Activated CD4-positive, alpha-beta T cell treated with anti-CD3 and anti-CD28 coated beads, Interleukin-2, amount 10 ng/mL, durations not matched to agents 24 days and 14 days (primary cell): ENCODE measurements at regions of chr16 and their contacts with region 1.

Region 1: GRCh38 chr16:81715358-81716196 is 63.5 kb upstream of the PLCG2 start:
- DNase-seq: peak; percentile 81
- H3K4me3 Mint-ChIP-seq: peak overlapping the region; percentile 60
- H3K27ac Mint-ChIP-seq: peak overlapping the region; percentile 65
- H3K4me1 Mint-ChIP-seq: peaks cover 42% of the 10 kb centered on the region
- H3K27me3 Mint-ChIP-seq: no peaks in the 10 kb centered on the region

Region 2: DNA sequence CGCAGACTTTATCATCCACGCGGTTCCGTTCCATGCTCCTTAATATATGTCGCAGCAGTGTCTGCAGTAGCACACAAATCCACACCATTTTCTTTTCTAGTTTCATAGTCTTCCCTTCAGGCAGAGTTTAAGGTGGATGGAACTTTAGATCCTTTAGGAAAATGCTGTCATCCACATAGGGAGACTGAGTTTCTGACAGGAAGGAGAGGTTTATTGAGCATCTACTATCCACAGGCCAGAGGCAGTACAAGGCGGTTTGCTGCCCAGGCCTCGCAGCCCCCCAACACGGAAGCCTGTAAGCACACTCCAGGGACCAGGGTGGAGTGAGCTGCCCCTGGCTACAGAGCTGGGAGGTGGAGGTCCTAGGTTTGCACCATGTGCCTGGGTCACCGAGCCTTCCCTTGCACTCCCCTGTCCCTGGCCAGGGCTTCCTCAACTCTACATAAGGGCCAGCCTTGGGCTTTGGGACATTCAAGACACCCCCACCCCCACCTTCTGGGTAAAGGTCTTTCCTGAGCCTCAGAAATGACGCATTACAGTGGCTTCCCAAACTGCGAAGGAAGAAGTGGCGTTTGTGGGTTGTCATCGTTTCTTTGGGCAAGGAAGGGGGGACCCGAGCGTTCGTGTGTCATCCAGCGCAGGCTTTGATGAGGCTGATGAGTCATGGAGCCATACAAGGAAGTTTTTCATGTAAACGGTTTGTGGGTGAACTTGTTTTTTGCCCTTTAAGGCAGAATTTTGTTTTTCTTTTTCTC is 83.0 kb before region 1 on chr16:
- intact Hi-C with region 1: loop called (anchors 5 kb)
- DNase-seq: peak; percentile 93
- H3K4me3 Mint-ChIP-seq: peak overlapping the region; percentile 82
- H3K27ac Mint-ChIP-seq: peak overlapping the region; percentile 100
- H3K4me1 Mint-ChIP-seq: peaks cover 65% of the 10 kb centered on the region
- H3K27me3 Mint-ChIP-seq: no peaks in the 10 kb centered on the region

Region 3: DNA sequence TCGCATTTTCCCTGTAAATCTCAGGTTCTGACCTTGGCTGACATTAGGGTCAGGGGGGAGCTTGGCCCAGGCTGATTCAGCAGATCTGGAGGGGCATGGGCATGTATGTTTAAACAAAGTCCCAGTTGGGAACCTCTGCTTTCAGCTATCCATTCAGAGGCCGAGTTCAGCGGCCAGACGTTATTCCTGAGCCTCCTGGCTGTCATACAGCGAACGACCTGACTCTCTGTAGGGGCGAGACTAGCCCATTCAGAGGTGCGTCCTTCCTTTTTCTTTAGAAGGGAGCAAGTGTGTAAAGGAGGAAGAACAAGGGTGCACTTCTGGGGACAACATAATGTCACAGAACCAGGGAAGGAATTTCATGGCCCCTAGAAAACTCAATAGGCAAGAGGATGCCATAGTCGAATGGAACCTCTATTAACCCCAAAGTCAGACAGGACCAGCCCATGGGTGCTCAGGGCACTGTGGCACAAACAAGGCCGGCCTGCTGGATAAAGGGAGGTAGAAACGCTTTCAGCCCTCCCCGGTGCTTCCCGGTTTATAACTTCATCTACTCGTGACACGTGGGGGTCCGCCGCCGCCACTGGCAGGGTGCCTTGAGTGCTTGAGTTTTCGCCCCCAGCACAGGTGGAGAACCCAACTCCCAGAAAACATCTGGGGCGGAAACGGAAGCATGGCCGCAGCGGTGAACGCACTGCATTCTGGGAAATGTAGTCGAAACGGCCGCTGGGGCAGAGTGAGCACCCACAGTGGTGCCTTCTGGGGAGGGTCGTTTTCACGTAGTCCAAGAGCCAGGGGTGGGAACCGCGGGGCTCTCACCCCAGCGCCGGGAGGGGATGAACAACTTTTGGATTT is 30.4 kb after region 1 on chr16:
- intact Hi-C with region 1: no loop called
- DNase-seq: peak; percentile 93
- H3K4me3 Mint-ChIP-seq: peak overlapping the region; percentile 84
- H3K27ac Mint-ChIP-seq: peak overlapping the region; percentile 86
- H3K4me1 Mint-ChIP-seq: peaks cover 19% of the 10 kb centered on the region
- H3K27me3 Mint-ChIP-seq: no peaks in the 10 kb centered on the region